H1 (cell line): ENCODE measurements at regions of chr22 and their contacts with region 1.

Region 1: GRCh38 chr22:40024201-40025061 is 29.7 kb downstream of the FAM83F start:
- DNase-seq: peak in 1 of 2 experiments; percentile 90
- H3K4me3 ChIP-seq: no peak overlapping the region
- H3K27ac ChIP-seq: peak overlapping the region; percentile 17; the same call in 1 of the 2 replicates
- H3K4me1 ChIP-seq: peaks cover 0 to 3% (median 0%) of the 10 kb centered on the region in 4 experiments; a peak in 3 of 7 replicates
- H3K27me3 ChIP-seq: no peaks in the 10 kb centered on the region
- CTCF ChIP-seq: peak; percentile 89 to 95 (median 90)
- EP300 ChIP-seq: no peak
- POLR2A ChIP-seq: no peak
- RAD21 ChIP-seq: peak; percentile 97 to 98

Region 2: DNA sequence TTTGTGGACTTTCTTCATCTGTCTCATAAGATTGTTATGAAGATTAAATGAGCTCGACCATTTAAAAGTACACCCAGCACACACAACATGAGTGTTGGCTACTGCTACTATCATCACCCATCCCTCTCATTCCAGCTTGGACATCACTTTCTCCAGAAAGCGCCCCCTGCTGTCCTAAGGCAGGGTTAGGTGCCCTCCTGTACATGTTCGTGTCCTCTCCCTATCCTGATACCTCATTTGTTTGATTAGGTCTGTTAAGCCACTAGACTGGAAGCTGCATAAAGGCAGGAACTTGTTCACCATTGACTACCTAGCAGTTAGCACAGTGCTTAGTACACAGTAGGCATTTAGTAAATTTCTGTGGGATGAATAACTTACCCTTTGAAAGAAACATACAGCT is 216.3 kb before region 1 on chr22:
- CTCF ChIA-PET with region 1: interaction called, 21 read pairs
- POLR2A ChIA-PET with region 1: no interaction called
- DNase-seq: peak in 1 of 2 experiments; percentile 73
- H3K4me3 ChIP-seq: no peak overlapping the region
- H3K27ac ChIP-seq: no peak overlapping the region
- H3K4me1 ChIP-seq: peaks cover 0 to 3% (median 0%) of the 10 kb centered on the region in 4 experiments; a peak in 1 of 7 replicates
- H3K27me3 ChIP-seq: peaks cover 0 to 2% (median 0%) of the 10 kb centered on the region in 4 experiments; a peak in 3 of 7 replicates
- CTCF ChIP-seq: peak; percentile 69 to 84 (median 76)
- EP300 ChIP-seq: no peak
- POLR2A ChIP-seq: no peak
- RAD21 ChIP-seq: peak; percentile 62 to 72

Region 3: GRCh38 chr22:39946503-39947219 is 77.8 kb before region 1 on chr22:
- CTCF ChIA-PET with region 1: interaction called, 23 read pairs
- POLR2A ChIA-PET with region 1: interaction called, 3 read pairs
- DNase-seq: no peak
- H3K4me3 ChIP-seq: no peak overlapping the region
- H3K27ac ChIP-seq: no peak overlapping the region
- H3K4me1 ChIP-seq: peaks cover 8 to 22% (median 11%) of the 10 kb centered on the region in 4 experiments; a peak in 5 of 7 replicates
- H3K27me3 ChIP-seq: no peaks in the 10 kb centered on the region; a peak in 1 of 7 replicates
- CTCF ChIP-seq: no peak
- EP300 ChIP-seq: no peak
- POLR2A ChIP-seq: no peak
- RAD21 ChIP-seq: no peak

Region 4: DNA sequence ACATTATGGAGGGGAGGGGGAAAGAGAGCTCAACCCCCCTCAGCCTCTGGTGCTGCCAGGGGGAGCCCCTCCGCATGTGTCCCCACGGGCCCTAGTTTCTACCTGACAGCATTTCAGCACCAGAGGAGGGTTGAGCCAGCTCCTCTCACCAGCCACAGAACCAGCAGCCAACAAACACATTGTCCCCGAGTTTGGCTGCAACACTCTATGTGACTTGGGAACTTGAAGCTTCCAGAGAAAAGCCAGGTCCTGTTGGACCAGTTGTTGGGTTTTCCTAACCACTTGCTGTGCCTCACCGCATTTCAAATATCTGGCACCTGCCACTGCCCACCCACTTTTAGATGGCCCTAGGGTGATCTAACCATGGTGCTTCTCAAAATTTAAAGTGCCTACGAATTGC is 50.8 kb before region 1 on chr22:
- CTCF ChIA-PET with region 1: interaction called, 12 read pairs
- POLR2A ChIA-PET with region 1: no interaction called
- DNase-seq: no peak
- H3K4me3 ChIP-seq: no peak overlapping the region
- H3K27ac ChIP-seq: no peak overlapping the region
- H3K4me1 ChIP-seq: peaks cover 0 to 7% (median 0%) of the 10 kb centered on the region in 4 experiments; a peak in 4 of 7 replicates
- H3K27me3 ChIP-seq: peaks cover 0 to 2% (median under 1%) of the 10 kb centered on the region in 4 experiments; a peak in 3 of 7 replicates
- CTCF ChIP-seq: no peak
- EP300 ChIP-seq: no peak
- POLR2A ChIP-seq: no peak
- RAD21 ChIP-seq: no peak

Region 5: GRCh38 chr22:40009292-40009769 is 15.1 kb before region 1 on chr22:
- CTCF ChIA-PET with region 1: interaction called, 159 read pairs
- POLR2A ChIA-PET with region 1: interaction called, 13 read pairs
- DNase-seq: peak in 1 of 2 experiments; percentile 74
- H3K4me3 ChIP-seq: peak overlapping the region in 2 of 4 experiments; percentile 12 to 17; a peak in 3 of 8 replicates
- H3K27ac ChIP-seq: no peak overlapping the region
- H3K4me1 ChIP-seq: peaks cover 14 to 25% (median 18%) of the 10 kb centered on the region in 4 experiments
- H3K27me3 ChIP-seq: no peaks in the 10 kb centered on the region
- CTCF ChIP-seq: no peak
- EP300 ChIP-seq: no peak
- POLR2A ChIP-seq: no peak
- RAD21 ChIP-seq: no peak